ENCODE measurements at regions of chr5 and their contacts with region 1.

Region 1: GRCh38 chr5:178232124-178232919 is at the start of gene PHYKPL:
- DNase-seq: peak; percentile 50
- H3K4me3 ChIP-seq: peak within 1 kb of the TSS; percentile 56 to 75 (median 73)
- H3K27ac ChIP-seq: no peak within 1 kb of the TSS
- H3K4me1 ChIP-seq: peaks cover 41% of the 10 kb centered on the region
- H3K27me3 ChIP-seq: no peaks in the 10 kb centered on the region
- CTCF ChIP-seq: peak; percentile 2 to 17
- total RNA-seq, gene PHYKPL: 14.8 to 25.2 TPM

Region 2: GRCh38 chr5:178279725-178280438 is 47.6 kb after region 1 on chr5:
- CTCF ChIA-PET with region 1: no interaction called
- dilution Hi-C with region 1: no loop called
- in situ Hi-C with region 1: no loop called
- intact Hi-C with region 1: loop called (anchors 1 kb)
- DNase-seq: peak; percentile 51
- H3K4me3 ChIP-seq: no peak overlapping the region
- H3K27ac ChIP-seq: no peak overlapping the region
- H3K4me1 ChIP-seq: no peaks in the 10 kb centered on the region
- H3K27me3 ChIP-seq: no peaks in the 10 kb centered on the region
- CTCF ChIP-seq: peak; percentile 73 to 90

Region 3: DNA sequence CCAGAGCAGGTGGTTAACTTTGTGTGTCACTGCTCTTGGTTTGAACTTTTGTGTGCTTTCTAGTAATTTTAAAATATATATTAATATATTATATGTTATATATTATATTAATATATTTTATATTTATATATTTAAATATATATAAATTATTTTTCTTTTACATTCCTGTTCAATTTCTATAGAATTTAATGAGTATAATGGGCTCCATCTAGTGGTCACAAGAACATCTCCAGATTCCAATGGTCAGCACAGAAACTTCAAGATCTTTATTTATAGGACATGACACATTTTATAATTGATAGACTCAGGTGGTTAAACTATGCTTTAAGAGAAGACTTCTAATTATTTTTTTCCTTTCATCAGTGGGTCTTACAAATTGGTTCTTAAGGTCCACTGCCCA is 318.7 kb after region 1 on chr5:
- CTCF ChIA-PET with region 1: no interaction called
- dilution Hi-C with region 1: no loop called
- in situ Hi-C with region 1: no loop called
- intact Hi-C with region 1: loop called (anchors 1 kb)
- DNase-seq: no peak
- H3K4me3 ChIP-seq: no peak overlapping the region
- H3K27ac ChIP-seq: no peak overlapping the region
- H3K4me1 ChIP-seq: no peaks in the 10 kb centered on the region
- H3K27me3 ChIP-seq: no peaks in the 10 kb centered on the region
- CTCF ChIP-seq: peak; percentile 10 to 50

Region 4: GRCh38 chr5:178590141-178590923 is 358.0 kb after region 1 on chr5 and contains the start of gene COL23A1:
- CTCF ChIA-PET with region 1: no interaction called
- dilution Hi-C with region 1: no loop called
- in situ Hi-C with region 1: no loop called
- intact Hi-C with region 1: loop called (anchors 1 kb)
- DNase-seq: peak; percentile 33
- H3K4me3 ChIP-seq: peak within 1 kb of the TSS; percentile 37 to 60 (median 49)
- H3K27ac ChIP-seq: no peak within 1 kb of the TSS
- H3K4me1 ChIP-seq: peaks cover 25% of the 10 kb centered on the region
- H3K27me3 ChIP-seq: no peaks in the 10 kb centered on the region
- CTCF ChIP-seq: peak; percentile 43 to 77
- total RNA-seq, gene COL23A1: 0.33 to 0.54 TPM

Region 5: DNA sequence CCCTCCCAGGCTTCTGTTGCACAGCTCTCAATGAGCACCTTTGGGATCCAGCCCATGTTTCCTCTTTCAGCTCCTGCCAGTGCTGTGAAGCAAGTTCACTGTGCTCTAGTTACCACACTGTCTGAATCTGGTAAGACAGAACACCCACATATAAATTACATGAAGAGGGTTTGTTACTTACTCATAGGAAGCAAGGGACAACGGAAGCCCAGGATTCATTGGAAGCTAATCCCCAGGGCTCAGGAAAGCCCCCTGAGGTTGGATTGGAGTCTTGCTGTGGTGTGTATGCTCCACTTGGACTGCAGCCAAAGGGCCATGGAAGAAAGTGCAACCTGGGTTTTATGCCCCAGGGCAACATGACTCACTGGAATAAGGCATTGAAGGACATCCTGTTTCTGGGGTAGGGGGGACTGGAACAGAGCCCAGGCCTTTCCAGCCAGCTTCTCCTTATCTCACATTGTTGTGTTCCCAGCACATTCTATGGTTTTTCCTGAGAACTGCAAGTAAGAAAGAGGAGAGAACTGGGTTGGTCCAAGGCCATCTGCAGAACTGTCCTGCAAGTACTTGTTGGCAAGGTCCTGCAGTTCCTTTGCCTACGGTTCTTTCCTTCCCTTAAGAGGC is 410.1 kb after region 1 on chr5:
- CTCF ChIA-PET with region 1: no interaction called
- dilution Hi-C with region 1: no loop called
- in situ Hi-C with region 1: no loop called
- intact Hi-C with region 1: loop called (anchors 5 kb)
- DNase-seq: peak; percentile 98
- H3K4me3 ChIP-seq: no peak overlapping the region
- H3K27ac ChIP-seq: no peak overlapping the region
- H3K4me1 ChIP-seq: peaks cover 35% of the 10 kb centered on the region
- H3K27me3 ChIP-seq: no peaks in the 10 kb centered on the region
- CTCF ChIP-seq: no peak

Region 6: DNA sequence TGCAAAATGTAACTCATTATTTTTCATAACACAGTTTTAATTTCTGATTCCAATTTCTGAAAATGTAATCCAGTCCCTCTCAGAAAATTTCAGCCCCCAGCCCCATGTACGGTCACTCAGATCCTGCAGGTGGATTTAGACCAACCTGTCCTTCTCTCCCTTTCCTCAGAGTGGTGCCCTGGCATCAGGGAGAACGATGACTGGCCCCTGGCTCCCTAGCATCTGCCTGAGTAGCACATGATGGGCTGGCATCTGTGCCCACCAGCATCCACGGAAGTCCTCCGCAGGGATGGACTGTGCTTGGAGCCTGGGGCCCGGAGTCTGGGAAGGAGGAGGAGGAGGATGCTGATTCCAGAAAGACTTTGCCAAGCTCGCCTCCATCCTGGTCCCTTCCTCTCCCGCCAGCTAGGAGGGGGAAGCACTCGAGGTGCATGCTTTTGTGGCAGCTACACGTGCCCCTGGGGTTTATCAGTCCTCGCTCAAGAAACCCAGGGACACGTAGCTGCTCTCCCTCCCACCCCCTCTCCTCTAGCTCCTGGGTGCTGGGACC is 1263.7 kb after region 1 on chr5:
- CTCF ChIA-PET with region 1: no interaction called
- dilution Hi-C with region 1: no loop called
- in situ Hi-C with region 1: no loop called
- intact Hi-C with region 1: loop called (anchors 5 kb)
- DNase-seq: no peak
- H3K4me3 ChIP-seq: no peak overlapping the region
- H3K27ac ChIP-seq: no peak overlapping the region
- H3K4me1 ChIP-seq: no peaks in the 10 kb centered on the region
- H3K27me3 ChIP-seq: no peaks in the 10 kb centered on the region
- CTCF ChIP-seq: peak in 1 of 2 donors; percentile 26

Region 7: DNA sequence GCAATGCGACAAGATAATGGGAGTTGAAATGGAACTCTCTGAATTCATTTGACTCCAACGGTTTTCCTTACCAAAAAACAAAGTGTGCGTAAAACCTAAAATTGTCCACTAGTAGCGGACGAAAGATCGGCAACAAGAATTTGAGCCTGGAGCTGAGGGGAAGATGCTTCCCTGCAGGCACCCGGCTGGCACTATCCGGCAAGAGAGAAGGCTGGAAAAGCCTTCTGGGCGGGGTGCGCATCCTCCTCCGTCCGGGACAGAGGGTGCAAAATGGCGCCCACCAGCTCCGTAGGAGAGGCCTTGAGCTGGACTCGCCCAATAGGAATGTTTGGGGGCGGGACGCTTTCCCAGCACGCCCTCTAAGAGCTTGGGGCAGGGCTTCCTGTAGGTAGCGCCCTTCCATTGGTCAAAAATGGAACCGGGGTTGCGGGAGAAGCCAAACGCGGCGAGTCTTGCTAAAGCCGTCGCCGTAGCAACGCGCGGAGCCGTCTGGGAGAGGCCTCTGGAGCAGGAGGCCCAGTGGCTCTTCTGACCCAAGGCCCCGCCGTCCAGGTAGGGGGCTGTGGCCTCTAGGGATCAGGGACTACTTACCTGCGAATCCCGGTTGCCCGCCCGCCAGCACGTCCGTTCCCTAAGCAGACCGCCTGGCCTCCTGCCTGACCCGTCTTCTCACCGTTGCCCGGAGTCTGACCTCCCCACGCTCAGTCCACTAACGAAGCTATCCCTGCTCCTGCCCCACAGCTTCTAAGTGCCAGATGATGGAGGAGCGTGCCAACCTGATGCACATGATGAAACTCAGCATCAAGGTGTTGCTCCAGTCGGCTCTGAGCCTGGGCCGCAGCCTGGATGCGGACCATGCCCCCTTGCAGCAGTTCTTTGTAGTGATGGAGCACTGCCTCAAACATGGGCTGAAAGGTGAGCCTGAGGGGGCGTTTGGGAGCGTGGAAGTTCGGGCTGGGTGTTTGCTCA is 1327.2 kb after region 1 on chr5:
- CTCF ChIA-PET with region 1: no interaction called
- dilution Hi-C with region 1: no loop called
- in situ Hi-C with region 1: no loop called
- intact Hi-C with region 1: loop called (anchors 10 kb)
- DNase-seq: peak; percentile 98
- H3K4me3 ChIP-seq: peak overlapping the region; percentile 70 to 95 (median 83)
- H3K27ac ChIP-seq: peak overlapping the region; percentile 76
- H3K4me1 ChIP-seq: peaks cover 13% of the 10 kb centered on the region
- H3K27me3 ChIP-seq: no peaks in the 10 kb centered on the region
- CTCF ChIP-seq: no peak